Cardiac septum (tissue), 1 donor: ENCODE measurements at regions of chr5 and their contacts with region 1.

Region 1: GRCh38 chr5:133868946-133869518 is 99.4 kb downstream of the C5orf15 start:
- DNase-seq: no peak

Region 2: GRCh38 chr5:133423618-133424282 is 445.3 kb before region 1 on chr5:
- intact Hi-C with region 1: loop called (anchors 5 kb)
- DNase-seq: peak; percentile 87

Region 3: GRCh38 chr5:133754575-133755169 is 114.4 kb before region 1 on chr5:
- intact Hi-C with region 1: loop called (anchors 5 kb)
- DNase-seq: no peak

Region 4: GRCh38 chr5:133773247-133774202 is 95.5 kb before region 1 on chr5:
- intact Hi-C with region 1: loop called (anchors 5 kb)
- DNase-seq: no peak